Ovary (tissue), 10 donors: ENCODE measurements at regions of chr2 and their contacts with region 1.

Region 1: DNA sequence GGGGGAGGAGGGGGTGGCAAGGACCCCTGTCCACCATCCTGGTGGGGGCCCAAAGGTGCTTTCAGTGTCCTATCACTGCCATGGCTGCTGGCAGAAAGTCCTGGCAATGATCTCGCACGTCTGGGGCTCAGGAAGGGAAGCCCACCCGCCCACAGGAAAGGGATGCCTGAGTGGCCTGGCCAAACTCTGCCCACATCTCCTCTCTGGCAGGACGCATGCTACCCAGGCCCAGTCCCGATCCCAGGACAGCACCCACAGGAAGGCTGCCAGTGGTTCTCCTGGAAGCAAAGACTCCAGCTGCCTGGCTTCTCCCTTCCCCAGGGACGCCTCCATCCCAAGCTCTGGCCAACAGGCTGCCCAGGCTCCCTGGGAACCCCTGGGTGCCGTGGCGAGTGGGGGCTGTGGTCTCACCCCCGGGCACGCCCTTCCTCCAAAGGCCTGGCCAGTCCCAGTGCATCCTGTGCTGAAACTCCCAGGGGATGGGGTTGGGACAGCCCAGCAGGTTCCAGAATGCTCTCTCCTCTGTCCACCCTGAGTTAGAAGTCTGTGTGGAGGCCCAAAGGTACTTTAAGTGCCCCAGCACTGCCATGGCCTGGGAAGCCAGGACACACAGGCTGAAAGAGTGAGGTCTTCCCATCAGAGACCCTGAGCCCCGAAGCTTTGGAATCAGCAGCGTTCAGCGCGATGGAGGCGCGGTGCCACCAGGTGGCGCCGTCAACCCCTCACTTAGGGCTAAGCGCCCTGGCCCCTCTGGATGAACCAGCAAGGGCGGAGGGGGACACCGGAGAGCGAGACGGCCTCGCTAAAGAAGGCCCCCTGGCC is 29.8 kb upstream of the TAF1B start:
- DNase-seq: peak; percentile 56 to 83 (median 74)
- H3K4me3 ChIP-seq: no peak overlapping the region
- H3K27ac ChIP-seq: no peak overlapping the region
- H3K4me1 ChIP-seq: no peaks in the 10 kb centered on the region
- H3K27me3 ChIP-seq: no peaks in the 10 kb centered on the region
- CTCF ChIP-seq: peak; percentile 72 to 86 (median 80)
- EP300 ChIP-seq: no peak
- POLR2A ChIP-seq: no peak

Region 2: DNA sequence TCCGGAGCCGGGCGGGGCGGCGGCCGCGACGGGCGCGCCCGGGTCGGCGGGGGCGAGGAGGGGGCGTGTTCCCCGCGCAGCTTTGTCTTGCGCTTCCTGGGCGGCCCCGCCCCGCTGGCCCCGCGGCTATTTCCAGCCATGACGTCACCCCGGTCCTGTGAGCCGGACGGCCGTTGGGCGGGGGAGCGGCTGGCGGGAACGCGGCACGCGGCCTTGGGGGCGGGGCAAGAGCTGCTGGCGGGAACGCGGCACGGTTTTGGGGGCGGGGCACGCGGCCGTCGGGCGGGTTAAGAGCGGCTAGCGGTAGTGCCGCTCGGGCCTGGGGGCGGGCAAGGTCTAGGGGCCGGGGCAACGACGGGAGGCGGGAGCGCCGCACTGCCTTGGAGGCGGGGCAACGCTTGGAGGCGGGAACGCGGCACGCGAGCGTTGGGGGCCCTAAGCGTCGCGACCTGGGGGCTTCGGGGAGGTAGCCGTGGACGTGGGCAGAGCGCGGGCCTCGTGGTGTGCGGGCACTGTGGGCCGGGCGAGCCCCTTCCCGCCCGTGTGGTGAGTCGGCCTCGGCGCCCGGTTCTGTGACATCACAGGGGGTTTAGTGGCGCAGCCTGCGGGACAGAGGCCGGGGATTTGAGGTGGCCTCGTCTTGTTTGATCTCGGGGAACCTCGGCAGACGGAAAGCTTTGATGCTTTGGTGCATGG is 230.5 kb after region 1 on chr2:
- intact Hi-C with region 1: loop called in 1 of 4 experiments (anchors 2 kb)
- DNase-seq: peak; percentile 98 to 100 (median 100)
- H3K4me3 ChIP-seq: peak overlapping the region; percentile 83
- H3K27ac ChIP-seq: peak overlapping the region; percentile 98 to 99
- H3K4me1 ChIP-seq: peaks cover 20% of the 10 kb centered on the region
- H3K27me3 ChIP-seq: no peaks in the 10 kb centered on the region
- CTCF ChIP-seq: no peak
- EP300 ChIP-seq: peak; percentile 90
- POLR2A ChIP-seq: peak; percentile 69

Region 3: GRCh38 chr2:10057231-10058107 is 243.9 kb after region 1 on chr2:
- intact Hi-C with region 1: loop called in 1 of 4 experiments (anchors 10 kb)
- DNase-seq: peak; percentile 86 to 91 (median 90)
- H3K4me3 ChIP-seq: no peak overlapping the region
- H3K27ac ChIP-seq: peak overlapping the region; percentile 47 to 89
- H3K4me1 ChIP-seq: peaks cover 8% of the 10 kb centered on the region
- H3K27me3 ChIP-seq: no peaks in the 10 kb centered on the region
- CTCF ChIP-seq: no peak
- EP300 ChIP-seq: no peak
- POLR2A ChIP-seq: no peak

Region 4: GRCh38 chr2:10097352-10098148 is 284.0 kb after region 1 on chr2:
- intact Hi-C with region 1: loop called in 2 of 4 experiments (anchors 5 to 10 kb)
- DNase-seq: peak; percentile 44 to 79 (median 66)
- H3K4me3 ChIP-seq: no peak overlapping the region
- H3K27ac ChIP-seq: no peak overlapping the region
- H3K4me1 ChIP-seq: peaks cover 2% of the 10 kb centered on the region
- H3K27me3 ChIP-seq: no peaks in the 10 kb centered on the region
- CTCF ChIP-seq: peak; percentile 76 to 82 (median 78)
- EP300 ChIP-seq: no peak
- POLR2A ChIP-seq: no peak

Region 5: DNA sequence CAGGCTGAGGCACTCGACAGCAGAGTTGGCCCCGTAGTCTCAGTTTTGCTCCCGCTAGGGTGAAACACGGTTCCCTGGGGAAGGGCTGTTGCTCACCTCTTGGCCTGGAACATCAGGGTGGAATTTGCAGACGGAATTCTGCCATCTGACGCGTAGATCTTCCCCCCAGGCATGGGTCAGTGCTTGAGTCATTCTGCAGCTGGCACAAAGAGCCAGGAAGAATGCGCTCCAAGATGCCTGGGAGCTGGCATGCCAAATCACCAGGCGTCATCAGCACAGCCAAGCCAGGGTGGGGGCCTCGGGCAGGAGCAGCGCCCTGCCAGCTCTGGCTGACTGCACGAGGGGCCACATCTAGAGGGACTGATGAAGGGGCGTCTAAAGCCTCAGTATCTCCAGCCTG is 591.9 kb after region 1 on chr2:
- intact Hi-C with region 1: no loop called
- DNase-seq: peak in 2 of 5 donors; percentile 32 to 49
- H3K4me3 ChIP-seq: no peak overlapping the region
- H3K27ac ChIP-seq: no peak overlapping the region
- H3K4me1 ChIP-seq: no peaks in the 10 kb centered on the region
- H3K27me3 ChIP-seq: no peaks in the 10 kb centered on the region
- CTCF ChIP-seq: no peak
- EP300 ChIP-seq: no peak
- POLR2A ChIP-seq: no peak

Region 6: DNA sequence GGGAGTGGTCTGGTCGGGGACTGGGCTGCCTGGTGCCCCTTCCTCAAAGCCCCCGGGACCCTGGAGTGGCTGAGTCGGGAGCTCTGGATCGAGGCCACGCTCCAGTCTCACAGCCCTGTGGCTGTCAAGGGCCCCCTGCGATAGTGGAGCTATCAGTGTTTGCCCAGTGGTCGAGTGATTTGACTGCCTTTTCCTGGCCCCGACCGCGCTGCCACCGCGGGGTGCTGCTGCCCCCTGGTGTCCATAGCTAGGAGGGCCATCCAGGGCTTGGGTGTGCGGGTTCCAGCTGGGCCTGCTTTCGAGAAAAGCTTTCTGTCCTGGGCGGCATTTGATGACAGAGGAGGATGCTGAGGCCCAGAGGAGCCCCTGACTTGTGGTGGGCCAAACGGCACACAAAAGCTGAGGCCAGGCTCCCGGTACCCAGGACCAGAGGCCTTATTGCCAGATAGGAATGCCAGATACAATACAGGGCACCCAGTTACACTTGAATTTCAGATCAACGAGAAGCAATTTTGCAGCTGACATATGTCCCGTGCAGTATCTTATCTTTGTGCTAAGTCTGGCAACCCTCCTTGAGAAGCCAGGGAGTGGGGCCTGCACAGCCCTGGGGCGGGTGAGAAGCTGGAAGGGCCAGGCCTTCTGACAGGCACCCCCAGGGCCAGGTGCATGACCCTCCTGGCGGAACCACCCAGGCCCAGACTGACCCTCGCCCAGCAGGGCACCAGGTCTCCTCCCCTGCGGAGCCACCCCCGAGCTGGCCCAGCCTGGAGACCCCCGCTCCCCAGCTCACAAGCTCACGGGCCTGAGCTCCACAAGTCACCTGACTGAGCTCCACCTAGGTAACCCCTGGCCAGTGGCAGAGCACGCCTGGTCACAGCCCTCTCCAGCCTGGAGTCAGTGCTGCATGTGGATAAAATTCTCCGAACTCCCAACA is 621.6 kb after region 1 on chr2:
- intact Hi-C with region 1: loop called in 2 of 4 experiments (anchors 10 kb)
- DNase-seq: peak; percentile 60 to 86 (median 75)
- H3K4me3 ChIP-seq: no peak overlapping the region
- H3K27ac ChIP-seq: no peak overlapping the region
- H3K4me1 ChIP-seq: no peaks in the 10 kb centered on the region
- H3K27me3 ChIP-seq: no peaks in the 10 kb centered on the region
- CTCF ChIP-seq: peak; percentile 78 to 92 (median 87)
- EP300 ChIP-seq: no peak
- POLR2A ChIP-seq: no peak